ENCODE measurements at regions of chr1 and their contacts with region 1.

Region 1: GRCh38 chr1:221435504-221435904 is 306.4 kb downstream of the DUSP10 start:
- DNase-seq: peak; percentile 84
- ATAC-seq: peak; percentile 4
- H3K4me3 ChIP-seq: no peak overlapping the region
- H3K27ac ChIP-seq: no peak overlapping the region; the same call in 1 of the 2 replicates
- H3K4me1 ChIP-seq: peaks cover 39% of the 10 kb centered on the region
- H3K27me3 ChIP-seq: no peaks in the 10 kb centered on the region
- CTCF ChIP-seq: peak; percentile 99

Region 2: GRCh38 chr1:220879076-220879508 is 556.4 kb before region 1 on chr1 and contains the start of gene HLX:
- CTCF ChIA-PET with region 1: no interaction called
- POLR2A ChIA-PET with region 1: interaction called, 9 read pairs
- intact Hi-C with region 1: loop called (anchors 1 kb)
- DNase-seq: peak; percentile 96
- ATAC-seq: peak; percentile 89
- H3K4me3 ChIP-seq: peak within 1 kb of the TSS; percentile 85
- H3K27ac ChIP-seq: peak within 1 kb of the TSS; percentile 20
- H3K4me1 ChIP-seq: peaks cover 16% of the 10 kb centered on the region; the same call in 1 of the 2 replicates
- H3K27me3 ChIP-seq: no peaks in the 10 kb centered on the region
- CTCF ChIP-seq: no peak
- total RNA-seq, gene HLX: 4.0 and 8.1 TPM in 2 replicates

Region 3: GRCh38 chr1:221089266-221089665 is 346.2 kb before region 1 on chr1:
- CTCF ChIA-PET with region 1: no interaction called
- POLR2A ChIA-PET with region 1: no interaction called
- intact Hi-C with region 1: loop called (anchors 10 kb)
- DNase-seq: peak; percentile 89
- ATAC-seq: peak; percentile 86
- H3K4me3 ChIP-seq: peak overlapping the region; percentile 17; the same call in 1 of the 2 replicates
- H3K27ac ChIP-seq: peak overlapping the region; percentile 30
- H3K4me1 ChIP-seq: peaks cover 54% of the 10 kb centered on the region
- H3K27me3 ChIP-seq: no peaks in the 10 kb centered on the region
- CTCF ChIP-seq: no peak

Region 4: GRCh38 chr1:221263831-221264767 is 171.4 kb before region 1 on chr1:
- CTCF ChIA-PET with region 1: interaction called, 10 read pairs
- POLR2A ChIA-PET with region 1: no interaction called
- intact Hi-C with region 1: loop called (anchors 2 kb)
- DNase-seq: peak; percentile 84
- ATAC-seq: peak; percentile 87
- H3K4me3 ChIP-seq: no peak overlapping the region
- H3K27ac ChIP-seq: no peak overlapping the region
- H3K4me1 ChIP-seq: no peaks in the 10 kb centered on the region
- H3K27me3 ChIP-seq: no peaks in the 10 kb centered on the region
- CTCF ChIP-seq: peak; percentile 84

Region 5: DNA sequence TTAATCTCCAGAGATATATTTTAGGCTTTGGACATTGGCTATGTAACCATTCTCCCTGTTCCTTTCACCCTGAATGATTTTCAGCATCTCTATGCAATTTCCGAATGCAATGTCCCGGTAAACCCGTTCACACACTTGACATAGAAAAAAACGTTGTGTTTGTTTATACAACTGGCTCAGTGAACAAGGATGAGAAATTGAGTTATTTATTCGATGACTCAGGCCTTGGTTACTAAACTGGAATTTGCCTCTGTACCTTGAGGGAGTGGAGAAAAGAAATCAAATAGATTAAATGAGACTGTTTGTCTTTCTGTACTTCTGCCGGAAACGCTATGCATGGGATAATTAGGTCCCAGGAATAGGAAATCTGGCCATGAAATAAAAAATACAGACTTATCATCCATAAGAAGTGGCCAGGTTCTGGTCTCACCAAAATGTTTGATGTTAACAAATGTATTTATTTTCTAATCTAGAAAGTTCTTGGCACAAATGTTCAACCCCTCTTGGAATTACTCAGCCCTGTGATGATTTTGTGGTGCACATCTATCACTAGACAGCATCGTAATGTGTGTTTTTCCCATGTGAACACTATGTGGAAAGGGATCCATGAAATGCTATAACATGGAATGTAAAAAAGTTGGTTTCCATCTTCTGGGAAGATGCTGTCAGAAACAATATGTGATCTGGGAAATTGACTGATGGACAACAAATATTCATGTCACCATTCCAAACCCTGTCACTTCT is 52.4 kb after region 1 on chr1:
- CTCF ChIA-PET with region 1: no interaction called
- POLR2A ChIA-PET with region 1: interaction called, 3 read pairs
- intact Hi-C with region 1: loop called (anchors 2 kb)
- DNase-seq: peak; percentile 96
- ATAC-seq: peak; percentile 98
- H3K4me3 ChIP-seq: no peak overlapping the region; the same call in 1 of the 2 replicates
- H3K27ac ChIP-seq: peak overlapping the region; percentile 80
- H3K4me1 ChIP-seq: peaks cover 28% of the 10 kb centered on the region
- H3K27me3 ChIP-seq: no peaks in the 10 kb centered on the region
- CTCF ChIP-seq: no peak

Region 6: GRCh38 chr1:221637641-221638041 is 202.1 kb after region 1 on chr1:
- CTCF ChIA-PET with region 1: no interaction called
- POLR2A ChIA-PET with region 1: no interaction called
- intact Hi-C with region 1: no loop called
- DNase-seq: peak; percentile 17
- ATAC-seq: no peak
- H3K4me3 ChIP-seq: no peak overlapping the region
- H3K27ac ChIP-seq: no peak overlapping the region
- H3K4me1 ChIP-seq: no peaks in the 10 kb centered on the region
- H3K27me3 ChIP-seq: no peaks in the 10 kb centered on the region
- CTCF ChIP-seq: no peak; the same call in 1 of the 2 replicates

Region 7: GRCh38 chr1:222455188-222455879 is 1019.8 kb after region 1 on chr1:
- CTCF ChIA-PET with region 1: no interaction called
- POLR2A ChIA-PET with region 1: no interaction called
- intact Hi-C with region 1: loop called (anchors 10 kb)
- DNase-seq: peak; percentile 98
- ATAC-seq: peak; percentile 99
- H3K4me3 ChIP-seq: peak overlapping the region; percentile 57
- H3K27ac ChIP-seq: no peak overlapping the region
- H3K4me1 ChIP-seq: peaks cover 7% of the 10 kb centered on the region; the same call in 1 of the 2 replicates
- H3K27me3 ChIP-seq: no peaks in the 10 kb centered on the region
- CTCF ChIP-seq: peak; percentile 99